Panc1 (cell line): ENCODE measurements at regions of chr3 and their contacts with region 1.

Region 1: DNA sequence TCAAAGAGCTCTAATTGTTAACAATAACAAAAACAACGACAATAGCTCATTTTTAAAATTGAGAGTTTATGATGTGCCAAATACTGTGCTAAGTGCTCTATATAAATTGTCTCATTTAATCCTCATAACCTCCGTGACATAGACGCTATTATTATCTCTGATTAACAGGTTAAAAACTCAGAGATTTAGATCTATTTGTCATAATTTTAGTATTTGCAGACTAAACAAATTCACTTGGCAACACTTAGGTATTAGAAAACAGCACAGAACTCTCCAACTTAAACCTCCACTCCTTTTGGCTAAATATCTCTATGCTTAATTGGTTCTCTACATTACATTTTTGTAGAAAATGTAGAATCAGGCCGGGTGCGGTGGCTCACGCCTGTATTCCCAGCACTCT is 136.4 kb downstream of the SPATA16 start:
- DNase-seq: no peak
- ATAC-seq: no peak
- H3K4me3 ChIP-seq: no peak overlapping the region
- H3K27ac ChIP-seq: no peak overlapping the region
- H3K4me1 ChIP-seq: no peaks in the 10 kb centered on the region
- H3K27me3 ChIP-seq: no peaks in the 10 kb centered on the region; the same call in 1 of the 2 replicates
- CTCF ChIP-seq: no peak

Region 2: GRCh38 chr3:171181907-171182690 is 1822.6 kb before region 1 on chr3:
- CTCF ChIA-PET with region 1: interaction called, 12 read pairs
- POLR2A ChIA-PET with region 1: no interaction called
- in situ Hi-C with region 1: no loop called
- intact Hi-C with region 1: no loop called
- DNase-seq: no peak
- ATAC-seq: no peak
- H3K4me3 ChIP-seq: no peak overlapping the region
- H3K27ac ChIP-seq: no peak overlapping the region
- H3K4me1 ChIP-seq: no peaks in the 10 kb centered on the region
- H3K27me3 ChIP-seq: no peaks in the 10 kb centered on the region
- CTCF ChIP-seq: no peak

Region 3: GRCh38 chr3:173045770-173046382 is 41.2 kb after region 1 on chr3:
- CTCF ChIA-PET with region 1: no interaction called
- POLR2A ChIA-PET with region 1: no interaction called
- in situ Hi-C with region 1: no loop called
- intact Hi-C with region 1: no loop called
- DNase-seq: no peak
- ATAC-seq: no peak
- H3K4me3 ChIP-seq: no peak overlapping the region
- H3K27ac ChIP-seq: no peak overlapping the region
- H3K4me1 ChIP-seq: no peaks in the 10 kb centered on the region
- H3K27me3 ChIP-seq: no peaks in the 10 kb centered on the region; the same call in 1 of the 2 replicates
- CTCF ChIP-seq: peak; percentile 9; the same call in 1 of the 2 replicates